CD8-positive, alpha-beta memory T cell (primary cell): ENCODE measurements at regions of chr14 and their contacts with region 1.

Region 1: DNA sequence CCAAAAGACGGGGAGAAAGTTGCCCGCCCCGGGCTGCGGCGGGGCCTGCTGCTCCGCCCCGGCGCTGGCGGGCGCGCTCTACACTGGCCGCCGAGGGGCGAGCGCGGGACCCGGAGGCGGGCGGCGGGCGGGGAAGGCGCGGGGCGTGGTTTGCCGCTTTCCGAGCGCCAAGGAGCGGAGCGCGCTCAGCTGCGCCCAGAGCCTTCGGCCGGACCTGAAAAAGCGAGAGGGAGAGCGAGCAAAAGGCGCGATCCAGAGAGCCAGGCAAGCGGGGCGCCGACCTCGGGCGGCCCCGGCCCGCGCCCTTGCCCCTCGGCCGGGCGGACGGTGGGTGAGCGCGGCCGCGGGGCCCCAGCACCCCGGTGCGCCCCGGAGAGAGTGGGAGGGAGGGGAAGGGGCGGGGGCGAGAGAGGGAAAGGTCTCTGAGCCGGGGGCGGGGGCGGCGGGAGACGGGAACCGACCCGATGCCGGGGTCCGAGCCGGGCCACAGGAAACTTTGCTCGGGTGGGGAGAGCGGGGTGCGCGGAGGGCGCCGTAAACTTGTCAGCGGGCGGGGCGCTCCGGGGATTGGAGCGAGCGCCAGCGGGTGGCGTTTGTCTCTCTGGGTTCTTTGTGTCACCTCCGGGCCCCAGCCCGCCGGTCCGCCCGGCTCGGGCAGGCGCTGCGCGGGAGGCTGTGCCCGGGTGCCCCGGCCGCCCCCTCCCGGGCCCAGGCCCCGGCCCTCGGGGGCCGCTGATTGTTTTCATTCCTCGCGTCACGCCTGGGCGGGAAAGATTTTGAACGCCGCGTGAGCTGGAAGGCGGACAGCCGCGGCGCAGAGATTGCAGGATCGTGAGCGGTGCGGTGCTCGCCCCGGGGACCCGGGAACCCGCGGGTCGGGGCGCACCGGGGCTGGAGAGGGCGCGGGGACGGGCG is at the start of gene SYNE2:
- DNase-seq: peak; percentile 75 to 85 (median 76)
- H3K4me3 ChIP-seq: peak within 1 kb of the TSS; percentile 82
- H3K4me3 Mint-ChIP-seq: peak within 1 kb of the TSS; percentile 93 to 100 (median 99)
- H3K27ac ChIP-seq: peak within 1 kb of the TSS; percentile 73
- H3K27ac Mint-ChIP-seq: peak within 1 kb of the TSS; percentile 92 to 99 (median 96)
- H3K4me1 ChIP-seq: peaks cover 43% of the 10 kb centered on the region
- H3K4me1 Mint-ChIP-seq: peaks cover 40 to 48% (median 41%) of the 10 kb centered on the region in 3 donors
- H3K27me3 ChIP-seq: no peaks in the 10 kb centered on the region
- H3K27me3 Mint-ChIP-seq: peaks cover 0 to 1% of the 10 kb centered on the region in 2 donors
- total RNA-seq, gene SYNE2: 45.2 to 45.6 TPM

Region 2: GRCh38 chr14:63759456-63759855 is 93.6 kb before region 1 on chr14:
- CTCF ChIA-PET with region 1: no interaction called
- POLR2A ChIA-PET with region 1: no interaction called
- DNase-seq: peak in 2 of 5 donors; percentile 35 to 37
- H3K4me3 ChIP-seq: peak overlapping the region; percentile 43
- H3K4me3 Mint-ChIP-seq: peak overlapping the region; percentile 37 to 88 (median 84)
- H3K27ac ChIP-seq: no peak overlapping the region
- H3K27ac Mint-ChIP-seq: peak overlapping the region; percentile 49 to 93 (median 88)
- H3K4me1 ChIP-seq: peaks cover 15% of the 10 kb centered on the region
- H3K4me1 Mint-ChIP-seq: peaks cover 6 to 13% (median 10%) of the 10 kb centered on the region in 3 donors
- H3K27me3 ChIP-seq: no peaks in the 10 kb centered on the region
- H3K27me3 Mint-ChIP-seq: no peaks in the 10 kb centered on the region

Region 3: GRCh38 chr14:63777024-63777423 is 76.0 kb before region 1 on chr14:
- CTCF ChIA-PET with region 1: no interaction called
- POLR2A ChIA-PET with region 1: no interaction called
- DNase-seq: no peak
- H3K4me3 ChIP-seq: no peak overlapping the region
- H3K4me3 Mint-ChIP-seq: no peak overlapping the region
- H3K27ac ChIP-seq: no peak overlapping the region
- H3K27ac Mint-ChIP-seq: peak overlapping the region in 1 of 8 donors; percentile 43
- H3K4me1 ChIP-seq: no peaks in the 10 kb centered on the region
- H3K4me1 Mint-ChIP-seq: no peaks in the 10 kb centered on the region
- H3K27me3 ChIP-seq: no peaks in the 10 kb centered on the region
- H3K27me3 Mint-ChIP-seq: peaks cover 0 to 2% of the 10 kb centered on the region in 2 donors

Region 4: GRCh38 chr14:63867933-63868921 is 15.2 kb after region 1 on chr14:
- CTCF ChIA-PET with region 1: interaction called, 40 read pairs
- POLR2A ChIA-PET with region 1: interaction called, 48 read pairs
- DNase-seq: peak in 3 of 5 donors; percentile 23 to 53 (median 36)
- H3K4me3 ChIP-seq: peak overlapping the region; percentile 47
- H3K4me3 Mint-ChIP-seq: peak overlapping the region; percentile 66 to 82 (median 77)
- H3K27ac ChIP-seq: no peak overlapping the region
- H3K27ac Mint-ChIP-seq: peak overlapping the region; percentile 88 to 96 (median 92)
- H3K4me1 ChIP-seq: peaks cover 73% of the 10 kb centered on the region
- H3K4me1 Mint-ChIP-seq: peaks cover 50 to 84% (median 81%) of the 10 kb centered on the region in 3 donors
- H3K27me3 ChIP-seq: no peaks in the 10 kb centered on the region
- H3K27me3 Mint-ChIP-seq: peaks cover 0 to 2% of the 10 kb centered on the region in 2 donors

Region 5: GRCh38 chr14:63881926-63882325 is 28.9 kb after region 1 on chr14:
- CTCF ChIA-PET with region 1: interaction called, 10 read pairs
- POLR2A ChIA-PET with region 1: interaction called, 3 read pairs
- DNase-seq: no peak
- H3K4me3 ChIP-seq: no peak overlapping the region
- H3K4me3 Mint-ChIP-seq: no peak overlapping the region
- H3K27ac ChIP-seq: no peak overlapping the region
- H3K27ac Mint-ChIP-seq: peak overlapping the region in 4 of 8 donors; percentile 38 to 73 (median 58)
- H3K4me1 ChIP-seq: no peaks in the 10 kb centered on the region
- H3K4me1 Mint-ChIP-seq: peaks cover 62 to 77% (median 68%) of the 10 kb centered on the region in 3 donors
- H3K27me3 ChIP-seq: no peaks in the 10 kb centered on the region
- H3K27me3 Mint-ChIP-seq: no peaks in the 10 kb centered on the region